Heart left ventricle (tissue), 16 donors: ENCODE measurements at regions of chr22 and their contacts with region 1.

Region 1: GRCh38 chr22:39078329-39078728 is 1.3 kb downstream of the APOBEC3G start:
- DNase-seq: no peak
- ATAC-seq: no peak
- H3K4me3 ChIP-seq: peak overlapping the region in 2 of 12 donors; percentile 67 to 74
- H3K27ac ChIP-seq: peak overlapping the region in 1 of 12 donors; percentile 91
- H3K4me1 ChIP-seq: peaks cover 0 to 14% (median 7%) of the 10 kb centered on the region in 12 donors
- H3K27me3 ChIP-seq: no peaks in the 10 kb centered on the region
- CTCF ChIP-seq: no peak
- POLR2A ChIP-seq: no peak

Region 2: GRCh38 chr22:39021552-39022250 is 56.6 kb before region 1 on chr22:
- intact Hi-C with region 1: loop called in 1 of 10 experiments (anchors 10 kb)
- DNase-seq: no peak
- ATAC-seq: peak in 1 of 4 donors; percentile 10
- H3K4me3 ChIP-seq: peak overlapping the region; percentile 14 to 68 (median 54)
- H3K27ac ChIP-seq: peak overlapping the region; percentile 47 to 88 (median 78)
- H3K4me1 ChIP-seq: peaks cover 0 to 23% (median 7%) of the 10 kb centered on the region in 12 donors
- H3K27me3 ChIP-seq: no peaks in the 10 kb centered on the region
- CTCF ChIP-seq: no peak
- POLR2A ChIP-seq: no peak

Region 3: DNA sequence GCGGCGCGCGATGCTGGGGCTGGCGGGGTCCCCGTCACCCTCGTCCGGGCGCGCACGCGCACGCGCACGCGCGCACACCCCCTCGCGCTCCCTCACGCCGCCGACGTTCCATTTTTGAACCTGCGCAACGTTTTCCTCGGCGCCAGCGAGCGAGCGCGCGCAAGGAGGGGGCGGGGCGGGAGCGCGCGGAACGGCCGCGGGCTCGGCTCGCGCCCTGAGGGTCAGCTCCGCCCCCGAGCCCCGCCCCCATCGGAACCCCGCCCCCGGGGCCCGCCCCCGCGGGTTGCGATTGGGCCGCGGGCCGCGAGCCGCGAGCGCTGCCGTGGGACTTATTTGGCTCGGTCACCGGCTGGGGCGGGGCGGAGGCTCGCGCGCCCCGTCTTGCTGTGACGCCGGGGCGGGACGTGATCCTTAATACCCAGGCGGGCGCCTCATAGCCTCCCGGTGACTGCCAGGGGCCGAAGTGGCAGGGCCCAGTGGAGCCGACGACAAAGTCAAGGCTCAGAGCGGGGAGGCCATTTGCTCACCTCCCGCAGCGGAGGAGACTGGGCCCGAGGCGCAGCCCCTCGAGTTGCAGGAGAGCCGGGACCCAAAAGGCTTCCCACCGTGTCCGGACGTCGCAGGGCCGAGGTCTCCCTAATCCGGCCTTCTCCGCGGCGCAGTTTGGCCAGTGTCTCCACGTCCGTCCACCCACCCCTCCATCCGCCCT is 74.3 kb after region 1 on chr22 and contains the start of gene CBX7:
- intact Hi-C with region 1: no loop called
- DNase-seq: peak; percentile 95 to 97 (median 96)
- ATAC-seq: peak; percentile 72 to 93 (median 92)
- H3K4me3 ChIP-seq: peak within 1 kb of the TSS; percentile 71 to 99 (median 92)
- H3K27ac ChIP-seq: peak within 1 kb of the TSS; percentile 82 to 99 (median 94)
- H3K4me1 ChIP-seq: peaks cover 0 to 54% (median 33%) of the 10 kb centered on the region in 12 donors
- H3K27me3 ChIP-seq: peaks cover 0 to 15% (median 0%) of the 10 kb centered on the region in 9 donors
- CTCF ChIP-seq: no peak
- POLR2A ChIP-seq: peak; percentile 80 to 95
- total RNA-seq, gene CBX7: 48.3 to 187 (median 75.0) TPM

Region 4: DNA sequence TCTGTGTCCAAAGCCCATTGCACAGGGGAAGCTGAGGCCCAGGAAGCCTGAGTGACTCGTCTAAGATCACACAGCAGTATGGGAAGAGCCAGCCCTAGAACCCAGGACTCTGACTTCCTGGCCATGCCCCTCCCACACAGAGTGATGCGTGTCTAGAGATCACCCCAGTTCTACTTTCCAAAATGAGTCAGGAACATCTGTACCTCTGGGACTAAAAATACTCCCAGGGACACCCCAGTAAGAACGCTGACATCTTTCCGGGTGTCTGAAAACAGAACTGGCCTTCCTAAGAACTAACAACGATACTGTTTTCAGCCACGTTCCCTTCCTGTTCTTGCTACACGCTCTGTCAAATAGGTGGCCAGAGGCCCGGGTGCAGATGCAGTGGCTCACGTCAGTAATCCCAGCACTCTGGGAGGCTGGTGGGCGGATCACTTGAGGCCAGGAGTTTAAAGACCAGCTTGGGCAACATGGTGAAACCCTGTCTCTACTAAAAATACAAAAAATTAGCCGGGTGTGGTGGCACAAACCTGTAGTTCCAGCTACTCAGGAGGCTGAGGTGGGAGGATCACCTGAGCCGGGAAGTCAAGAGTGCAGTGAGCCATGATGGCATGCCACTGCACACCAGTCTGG is 188.2 kb after region 1 on chr22:
- intact Hi-C with region 1: no loop called
- DNase-seq: peak in 1 of 5 donors; percentile 57
- ATAC-seq: peak; percentile 31 to 79 (median 44)
- H3K4me3 ChIP-seq: no peak overlapping the region
- H3K27ac ChIP-seq: peak overlapping the region in 11 of 12 donors; percentile 34 to 83 (median 66)
- H3K4me1 ChIP-seq: peaks cover 0 to 58% (median 27%) of the 10 kb centered on the region in 12 donors
- H3K27me3 ChIP-seq: no peaks in the 10 kb centered on the region
- CTCF ChIP-seq: no peak
- POLR2A ChIP-seq: no peak